ENCODE measurements at regions of chr7 and their contacts with region 1.

Region 1: GRCh38 chr7:92088266-92088665 is 46.0 kb downstream of the CYP51A1 start:
- DNase-seq: no peak
- ATAC-seq: no peak

Region 2: GRCh38 chr7:91961816-91962215 is 126.5 kb before region 1 on chr7:
- intact Hi-C with region 1: no loop called
- DNase-seq: no peak
- ATAC-seq: no peak

Region 3: GRCh38 chr7:92206019-92206418 is 117.8 kb after region 1 on chr7:
- intact Hi-C with region 1: loop called (anchors 10 kb)
- DNase-seq: no peak
- ATAC-seq: no peak

Region 4: DNA sequence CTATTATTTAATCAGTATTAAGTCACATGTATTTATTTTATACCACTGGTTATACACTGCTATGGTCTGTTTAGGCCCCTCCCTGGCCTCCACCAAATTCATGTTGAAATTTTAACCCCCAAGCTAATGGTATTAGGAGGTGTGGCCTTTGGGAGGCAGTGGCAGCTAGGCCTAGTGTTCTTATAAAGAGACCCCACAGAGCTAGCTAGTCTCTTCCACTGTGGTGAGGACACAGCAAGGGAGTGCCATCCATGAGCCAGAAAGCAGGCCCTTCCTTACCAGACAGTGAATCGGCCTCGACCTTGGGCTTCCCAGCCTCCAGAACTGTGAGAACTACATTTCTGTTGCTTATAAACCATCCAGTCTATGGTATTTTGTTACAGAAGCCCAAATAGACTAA is 469.0 kb after region 1 on chr7:
- intact Hi-C with region 1: no loop called
- DNase-seq: no peak
- ATAC-seq: no peak

Measured in Right ventricle myocardium superior (tissue), 1 donor.